Panc1 (cell line): ENCODE measurements at regions of chr20 and their contacts with region 1.

Region 1: DNA sequence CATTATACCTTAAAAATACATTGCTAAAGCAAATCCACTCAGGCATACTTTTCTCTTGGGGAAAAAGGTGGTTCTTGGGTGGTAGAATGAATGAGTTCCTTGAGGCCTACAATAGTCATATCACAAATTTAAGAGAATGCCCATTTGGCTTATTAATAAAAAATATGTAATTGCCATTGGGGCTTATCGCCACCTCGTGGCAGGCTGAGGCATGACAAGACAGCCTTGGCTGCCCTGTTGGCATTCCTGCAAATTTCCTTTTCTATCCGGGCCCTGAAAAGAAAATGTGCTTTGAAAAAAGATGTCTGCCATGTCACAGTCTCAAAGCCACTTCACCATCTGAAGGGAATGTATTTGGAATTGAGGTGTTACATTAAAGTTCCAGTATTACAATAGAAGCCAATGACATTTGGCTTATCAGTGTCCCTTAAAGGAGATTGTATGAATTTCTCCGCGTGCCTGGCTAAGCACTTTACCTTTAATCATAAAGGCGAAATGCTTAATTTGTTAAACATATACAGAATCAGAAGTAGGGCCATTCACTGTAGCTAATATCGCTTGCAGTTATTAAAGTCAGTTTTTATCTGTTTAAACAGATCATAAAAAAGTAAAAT is 188.3 kb upstream of the ZFP64 start:
- DNase-seq: peak; percentile 25
- ATAC-seq: no peak
- H3K4me3 ChIP-seq: no peak overlapping the region
- H3K27ac ChIP-seq: no peak overlapping the region
- H3K4me1 ChIP-seq: no peaks in the 10 kb centered on the region
- H3K27me3 ChIP-seq: 0 out of 2 replicates have a peak, but pooled peaks cover 2% of the 10 kb centered on the region
- CTCF ChIP-seq: peak; percentile 96

Region 2: DNA sequence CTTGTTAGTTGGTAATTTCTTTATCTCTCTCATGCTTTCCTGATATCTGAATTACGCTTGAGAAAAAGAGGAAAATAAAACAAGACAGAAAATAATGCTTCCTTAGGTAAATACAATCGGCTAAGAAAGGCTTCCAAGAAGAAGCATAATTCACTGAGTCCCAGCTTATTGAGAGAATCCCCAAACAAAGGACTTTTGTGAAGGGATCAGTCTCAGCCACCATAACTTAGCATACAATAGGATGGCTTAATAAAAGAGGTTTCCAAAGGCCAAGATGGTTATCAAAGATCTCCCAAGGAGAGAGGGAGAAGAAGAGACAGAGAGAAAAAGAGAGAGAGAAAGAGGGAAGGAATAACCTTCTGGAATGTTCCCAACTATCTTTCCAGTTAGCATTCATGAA is 531.5 kb before region 1 on chr20:
- CTCF ChIA-PET with region 1: no interaction called
- POLR2A ChIA-PET with region 1: no interaction called
- in situ Hi-C with region 1: no loop called
- intact Hi-C with region 1: no loop called
- DNase-seq: no peak
- ATAC-seq: no peak
- H3K4me3 ChIP-seq: no peak overlapping the region
- H3K27ac ChIP-seq: no peak overlapping the region
- H3K4me1 ChIP-seq: peaks cover 3% of the 10 kb centered on the region; the same call in 1 of the 2 replicates
- H3K27me3 ChIP-seq: no peaks in the 10 kb centered on the region
- CTCF ChIP-seq: no peak

Region 3: GRCh38 chr20:52127309-52127708 is 252.5 kb before region 1 on chr20:
- CTCF ChIA-PET with region 1: no interaction called
- POLR2A ChIA-PET with region 1: no interaction called
- in situ Hi-C with region 1: no loop called
- intact Hi-C with region 1: loop called (anchors 5 kb)
- DNase-seq: no peak
- ATAC-seq: no peak
- H3K4me3 ChIP-seq: no peak overlapping the region
- H3K27ac ChIP-seq: no peak overlapping the region
- H3K4me1 ChIP-seq: no peaks in the 10 kb centered on the region
- H3K27me3 ChIP-seq: no peaks in the 10 kb centered on the region
- CTCF ChIP-seq: no peak

Region 4: GRCh38 chr20:52145587-52145986 is 234.2 kb before region 1 on chr20:
- CTCF ChIA-PET with region 1: no interaction called
- POLR2A ChIA-PET with region 1: no interaction called
- in situ Hi-C with region 1: no loop called
- intact Hi-C with region 1: no loop called
- DNase-seq: no peak
- ATAC-seq: no peak
- H3K4me3 ChIP-seq: no peak overlapping the region
- H3K27ac ChIP-seq: no peak overlapping the region
- H3K4me1 ChIP-seq: no peaks in the 10 kb centered on the region
- H3K27me3 ChIP-seq: no peaks in the 10 kb centered on the region
- CTCF ChIP-seq: no peak

Region 5: DNA sequence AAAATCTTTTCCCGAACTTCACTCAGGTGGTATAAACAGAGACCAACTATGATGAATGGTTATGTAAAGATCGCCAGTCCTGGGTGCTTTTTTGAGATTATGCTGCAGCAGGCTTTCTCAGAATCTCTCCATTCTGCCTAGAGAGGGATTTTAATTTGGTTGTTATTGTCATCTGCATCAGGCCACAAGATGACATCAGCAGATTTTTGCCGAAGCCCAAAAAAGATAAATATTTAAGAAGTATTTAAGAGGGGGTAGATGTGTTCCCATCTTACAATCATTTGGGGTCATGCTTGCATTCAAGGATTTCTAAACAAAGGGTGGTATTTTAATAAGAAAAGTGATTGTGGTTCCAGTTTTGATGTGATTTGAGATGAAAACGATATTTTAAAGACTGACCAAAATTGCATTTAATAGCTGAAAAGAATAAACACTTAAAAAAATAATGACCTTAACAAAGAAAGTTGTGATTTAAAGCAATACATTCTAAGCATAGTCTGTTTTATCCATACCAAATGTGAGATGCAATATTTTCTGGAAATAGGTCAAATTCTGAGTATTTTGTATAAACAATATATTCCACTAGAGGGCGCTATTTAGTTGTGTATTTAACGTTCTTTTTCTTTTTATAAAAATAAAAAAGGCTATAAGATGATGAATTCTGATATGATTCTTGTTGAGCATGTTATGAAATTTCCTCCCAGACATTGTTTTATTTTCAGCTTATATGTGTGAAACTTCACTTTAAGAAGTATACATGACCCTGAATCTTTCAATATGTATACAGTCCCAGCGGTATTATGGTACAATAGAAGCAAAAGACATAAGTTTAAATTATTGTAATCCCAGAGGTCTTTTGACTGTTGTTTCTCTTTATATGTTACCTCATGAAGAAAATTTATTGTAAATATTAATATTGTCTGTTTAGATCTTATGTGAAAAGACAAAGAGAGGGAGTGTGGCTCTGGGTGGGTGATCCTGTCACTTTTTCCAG is 137.3 kb before region 1 on chr20:
- CTCF ChIA-PET with region 1: no interaction called
- POLR2A ChIA-PET with region 1: no interaction called
- in situ Hi-C with region 1: no loop called
- intact Hi-C with region 1: loop called (anchors 2 kb)
- DNase-seq: peak; percentile 1
- ATAC-seq: no peak
- H3K4me3 ChIP-seq: no peak overlapping the region
- H3K27ac ChIP-seq: no peak overlapping the region
- H3K4me1 ChIP-seq: no peaks in the 10 kb centered on the region
- H3K27me3 ChIP-seq: no peaks in the 10 kb centered on the region
- CTCF ChIP-seq: peak; percentile 49; the same call in 1 of the 2 replicates

Region 6: DNA sequence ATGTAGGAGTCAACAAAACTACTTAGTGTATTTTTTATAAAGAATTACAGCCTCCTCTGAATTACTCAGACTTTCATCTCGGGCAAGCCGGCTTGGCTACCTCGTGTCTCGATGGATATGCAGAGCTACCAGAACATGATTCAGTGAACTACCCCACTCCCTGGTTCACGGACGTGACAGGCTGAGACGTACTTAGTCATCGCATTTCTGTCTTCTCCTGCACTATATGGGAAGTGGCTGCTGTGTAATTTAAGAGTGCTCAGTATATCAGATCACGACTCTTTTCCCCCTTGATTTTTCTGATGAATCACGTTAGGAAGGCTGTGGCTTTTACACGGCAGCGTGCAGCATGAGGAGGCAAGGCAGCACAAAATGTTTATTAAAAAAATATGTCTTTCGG is 114.4 kb after region 1 on chr20:
- CTCF ChIA-PET with region 1: no interaction called
- POLR2A ChIA-PET with region 1: no interaction called
- in situ Hi-C with region 1: no loop called
- intact Hi-C with region 1: no loop called
- DNase-seq: no peak
- ATAC-seq: no peak
- H3K4me3 ChIP-seq: no peak overlapping the region
- H3K27ac ChIP-seq: no peak overlapping the region
- H3K4me1 ChIP-seq: no peaks in the 10 kb centered on the region
- H3K27me3 ChIP-seq: no peaks in the 10 kb centered on the region
- CTCF ChIP-seq: no peak